ENCODE measurements at regions of chr16 and their contacts with region 1.

Region 1: DNA sequence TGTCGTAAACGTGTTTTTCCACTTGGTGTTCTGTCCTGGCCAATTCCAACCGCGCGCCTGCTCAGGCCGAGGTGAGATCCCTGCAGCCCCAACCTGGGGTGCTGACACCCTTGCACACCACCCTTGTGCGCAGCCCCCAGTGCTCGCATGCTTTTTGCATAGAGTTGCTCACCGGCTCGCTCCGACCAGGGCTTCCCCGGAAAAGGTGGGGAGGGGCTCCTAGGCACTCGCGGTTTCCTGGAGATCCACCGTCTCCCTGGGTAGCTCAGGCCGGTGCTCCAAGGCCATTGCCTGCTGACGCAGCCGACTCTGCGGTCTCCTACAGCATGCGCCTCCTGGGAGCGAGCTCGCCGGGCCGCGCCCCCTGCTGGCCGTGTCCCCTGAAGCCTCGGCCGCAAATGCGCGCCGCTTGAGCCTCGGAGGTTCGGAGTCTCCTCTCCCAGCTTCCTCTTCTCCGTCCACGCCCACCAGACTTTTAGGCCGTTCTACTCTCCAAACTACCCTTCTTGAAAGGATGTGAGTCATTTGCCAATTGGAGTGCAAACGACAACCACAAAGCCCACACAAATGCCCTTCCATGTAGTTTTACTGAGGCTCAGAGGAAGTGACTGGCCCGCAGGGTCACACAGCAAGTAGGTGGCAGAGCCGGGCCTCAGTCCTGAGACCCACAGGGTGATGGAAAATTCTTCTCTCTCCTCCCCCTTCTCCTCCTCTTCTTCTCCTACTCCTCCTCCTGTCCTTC is 7.2 kb upstream of the PDP2 start:
- DNase-seq: peak; percentile 93
- H3K4me3 Mint-ChIP-seq: peak overlapping the region; percentile 65
- H3K27ac Mint-ChIP-seq: peak overlapping the region; percentile 83
- H3K4me1 Mint-ChIP-seq: peaks cover 42% of the 10 kb centered on the region
- H3K27me3 Mint-ChIP-seq: peaks cover 8% of the 10 kb centered on the region

Region 2: DNA sequence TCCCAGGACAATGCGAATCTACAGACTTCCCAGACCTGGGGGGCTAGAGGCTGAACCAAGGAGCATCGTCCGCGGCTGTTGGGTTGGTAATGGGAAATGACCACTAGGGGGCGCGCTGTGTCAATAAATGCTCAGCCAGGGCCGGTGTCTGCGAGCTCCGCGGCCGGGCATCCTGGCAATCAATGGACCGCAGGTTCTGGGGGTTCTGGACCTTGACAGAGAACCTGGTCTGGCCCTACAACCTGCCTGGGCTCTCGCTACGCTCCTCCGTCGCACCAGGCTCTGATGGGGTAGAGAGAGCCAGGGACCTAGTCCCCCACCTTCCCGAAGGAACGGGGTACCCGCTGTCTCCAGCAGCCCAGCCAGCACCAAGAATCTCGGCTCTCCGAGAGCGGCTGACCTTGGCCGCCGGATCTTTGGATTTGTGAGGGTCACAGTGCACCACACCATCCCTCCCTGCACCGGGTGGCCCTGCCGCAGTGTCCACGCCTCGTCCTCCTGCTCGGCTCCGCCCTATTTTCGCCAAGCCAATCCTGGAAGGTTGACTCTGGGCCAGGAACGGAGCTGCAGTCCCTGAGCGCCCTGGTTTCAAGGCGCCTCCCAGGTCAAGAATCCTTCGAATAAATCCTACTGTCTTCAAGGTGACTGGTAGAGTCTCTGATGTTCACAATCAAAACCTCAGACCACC is 466.4 kb before region 1 on chr16:
- CTCF ChIA-PET with region 1: interaction called, 23 read pairs
- DNase-seq: peak; percentile 91
- H3K4me3 Mint-ChIP-seq: peak overlapping the region; percentile 78
- H3K27ac Mint-ChIP-seq: peak overlapping the region; percentile 24
- H3K4me1 Mint-ChIP-seq: peaks cover 32% of the 10 kb centered on the region
- H3K27me3 Mint-ChIP-seq: peaks cover 35% of the 10 kb centered on the region

Region 3: GRCh38 chr16:66728117-66728787 is 144.9 kb before region 1 on chr16:
- CTCF ChIA-PET with region 1: interaction called, 34 read pairs
- DNase-seq: no peak
- H3K4me3 Mint-ChIP-seq: no peak overlapping the region
- H3K27ac Mint-ChIP-seq: peak overlapping the region; percentile 67
- H3K4me1 Mint-ChIP-seq: peaks cover 2% of the 10 kb centered on the region
- H3K27me3 Mint-ChIP-seq: no peaks in the 10 kb centered on the region

Region 4: DNA sequence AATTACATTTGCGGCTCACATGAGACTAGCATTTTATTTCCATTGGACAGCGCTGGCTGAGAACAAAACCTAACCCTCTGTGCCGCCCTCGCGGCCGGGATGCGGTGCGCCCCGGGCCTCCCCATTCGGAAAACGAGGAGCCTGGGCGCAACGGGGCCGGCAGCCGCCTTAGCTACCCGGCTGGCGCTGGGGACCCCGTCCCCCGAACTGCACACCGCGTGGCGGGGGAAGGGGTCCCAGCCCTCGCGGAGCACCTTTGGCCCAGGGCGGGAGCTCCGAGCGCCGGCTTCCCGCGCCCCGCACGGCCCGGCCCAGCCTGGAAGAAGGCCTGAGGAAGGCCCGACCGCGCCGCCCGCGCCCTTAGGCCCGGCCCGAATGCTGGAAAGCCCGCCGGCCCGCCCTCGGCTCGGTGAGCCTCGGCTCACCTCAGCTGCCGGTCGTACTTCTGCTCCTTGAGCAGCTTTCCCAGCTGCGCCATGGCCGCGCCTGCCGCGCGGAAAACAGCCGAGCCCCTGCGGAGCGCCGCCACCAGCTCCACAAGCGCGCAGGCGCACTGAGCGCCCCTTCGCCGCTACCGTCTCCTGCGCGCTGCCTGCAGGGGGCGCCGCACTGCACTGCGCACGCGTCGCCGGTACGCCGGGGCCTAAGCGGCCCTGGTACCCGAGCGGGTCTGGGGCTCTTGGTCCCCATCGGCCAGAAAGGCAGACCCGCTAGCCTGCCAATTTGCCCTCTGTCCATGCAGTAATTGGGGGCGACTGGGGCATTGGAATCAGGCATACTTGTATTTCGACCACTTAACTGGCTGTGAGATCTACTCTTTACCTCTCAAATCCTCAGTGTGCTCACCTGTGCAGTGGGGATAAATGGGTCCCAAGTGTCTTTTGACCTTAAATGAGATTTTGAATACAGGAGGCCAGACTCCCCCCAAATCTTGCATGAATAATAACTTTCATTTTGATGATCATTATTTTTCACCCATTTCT is 42.4 kb before region 1 on chr16 and contains the start of gene NAE1:
- CTCF ChIA-PET with region 1: interaction called, 117 read pairs
- DNase-seq: peak; percentile 89
- H3K4me3 Mint-ChIP-seq: peak within 1 kb of the TSS; percentile 71
- H3K27ac Mint-ChIP-seq: peak within 1 kb of the TSS; percentile 78
- H3K4me1 Mint-ChIP-seq: peaks cover 36% of the 10 kb centered on the region
- H3K27me3 Mint-ChIP-seq: peaks cover 4% of the 10 kb centered on the region

Region 5: GRCh38 chr16:66853261-66854124 is 19.6 kb before region 1 on chr16:
- CTCF ChIA-PET with region 1: interaction called, 44 read pairs
- DNase-seq: no peak
- H3K4me3 Mint-ChIP-seq: no peak overlapping the region
- H3K27ac Mint-ChIP-seq: no peak overlapping the region
- H3K4me1 Mint-ChIP-seq: peaks cover under 1% of the 10 kb centered on the region
- H3K27me3 Mint-ChIP-seq: peaks cover 27% of the 10 kb centered on the region

Region 6: DNA sequence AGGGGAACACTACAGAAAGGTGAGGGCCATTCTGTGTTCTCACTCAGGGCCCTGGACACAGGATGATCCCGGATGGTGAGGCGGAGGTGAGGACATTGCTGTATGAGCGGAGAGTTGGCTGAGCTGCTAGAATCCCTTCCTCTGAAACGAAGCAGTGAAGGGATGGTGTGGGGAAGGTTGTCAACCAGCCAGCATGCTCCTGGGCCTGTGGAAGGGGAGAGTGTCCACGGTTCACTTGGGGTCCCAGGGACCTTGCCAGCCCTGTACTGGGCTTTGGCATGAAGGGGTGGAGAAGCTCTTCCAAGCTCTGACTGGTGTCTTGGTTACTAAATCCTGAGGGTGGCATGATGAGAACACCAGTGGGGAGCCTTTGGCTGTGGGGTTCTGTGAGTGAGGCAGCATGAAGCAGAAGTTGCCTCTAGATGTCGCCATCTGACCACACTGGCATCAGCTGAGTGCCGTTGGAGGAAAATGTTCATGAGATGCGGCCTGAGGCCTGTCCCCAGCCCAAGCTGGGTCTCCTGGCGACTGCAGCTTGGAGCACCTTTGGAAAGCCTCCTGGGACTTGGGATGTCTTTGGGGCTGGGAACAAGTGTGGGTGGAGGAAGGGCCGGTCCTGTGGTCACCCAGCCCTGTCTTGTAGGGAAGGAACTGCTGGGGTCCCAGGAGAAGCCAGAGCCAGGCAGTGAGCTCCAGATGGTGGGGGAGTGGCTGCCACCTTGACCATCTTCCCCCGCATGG is 22.0 kb after region 1 on chr16:
- CTCF ChIA-PET with region 1: interaction called, 19 read pairs
- DNase-seq: peak; percentile 82
- H3K4me3 Mint-ChIP-seq: no peak overlapping the region
- H3K27ac Mint-ChIP-seq: no peak overlapping the region
- H3K4me1 Mint-ChIP-seq: peaks cover 18% of the 10 kb centered on the region
- H3K27me3 Mint-ChIP-seq: peaks cover 6% of the 10 kb centered on the region

Region 7: GRCh38 chr16:67000384-67001351 is 127.6 kb after region 1 on chr16:
- CTCF ChIA-PET with region 1: no interaction called
- DNase-seq: peak; percentile 78
- H3K4me3 Mint-ChIP-seq: peak overlapping the region; percentile 84
- H3K27ac Mint-ChIP-seq: peak overlapping the region; percentile 86
- H3K4me1 Mint-ChIP-seq: peaks cover 52% of the 10 kb centered on the region
- H3K27me3 Mint-ChIP-seq: peaks cover 5% of the 10 kb centered on the region